ENCODE measurements at regions of chr22 and their contacts with region 1.

Region 1: DNA sequence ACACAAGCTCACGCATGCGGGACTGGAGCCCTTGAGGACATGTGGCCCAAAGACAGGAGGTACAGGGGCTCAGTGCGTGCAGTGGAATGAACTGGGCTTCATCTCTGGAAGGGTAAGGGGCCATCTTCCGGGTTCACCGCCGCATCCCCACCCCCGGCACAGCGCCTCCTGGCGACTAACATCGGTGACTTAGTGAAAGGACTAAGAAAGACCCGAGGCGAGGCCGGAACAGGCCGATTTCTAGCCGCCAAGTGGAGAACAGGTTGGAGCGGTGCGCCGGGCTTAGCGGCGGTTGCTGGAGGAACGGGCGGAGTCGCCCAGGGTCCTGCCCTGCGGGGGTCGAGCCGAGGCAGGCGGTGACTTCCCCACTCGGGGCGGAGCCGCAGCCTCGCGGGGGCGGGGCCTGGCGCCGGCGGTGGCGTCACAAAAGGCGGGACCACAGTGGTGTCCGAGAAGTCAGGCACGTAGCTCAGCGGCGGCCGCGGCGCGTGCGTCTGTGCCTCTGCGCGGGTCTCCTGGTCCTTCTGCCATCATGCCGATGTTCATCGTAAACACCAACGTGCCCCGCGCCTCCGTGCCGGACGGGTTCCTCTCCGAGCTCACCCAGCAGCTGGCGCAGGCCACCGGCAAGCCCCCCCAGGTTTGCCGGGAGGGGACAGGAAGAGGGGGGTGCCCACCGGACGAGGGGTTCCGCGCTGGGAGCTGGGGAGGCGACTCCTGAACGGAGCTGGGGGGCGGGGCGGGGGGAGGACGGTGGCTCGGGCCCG is at the start of gene MIF:
- DNase-seq: peak; percentile 99

Region 2: DNA sequence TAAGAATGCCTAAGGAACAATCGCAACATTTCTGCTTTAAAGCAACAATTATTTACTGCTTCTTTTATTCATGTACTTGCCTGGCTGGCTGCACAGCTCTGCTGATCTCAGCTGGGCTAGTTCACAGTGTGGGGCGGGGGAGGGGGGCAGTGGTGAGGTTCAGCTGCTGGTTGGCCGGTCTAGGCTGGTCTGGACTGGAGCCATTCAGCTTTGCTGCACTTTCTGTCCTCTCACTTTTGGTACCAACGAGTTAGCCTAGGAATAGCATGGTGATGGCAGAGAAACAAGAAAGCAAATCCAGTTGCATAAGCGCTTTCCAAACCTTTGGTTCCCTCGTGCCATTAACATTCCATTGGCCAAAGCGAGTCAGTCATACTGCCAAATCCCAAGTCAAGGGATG is 15.9 kb before region 1 on chr22:
- CTCF ChIA-PET with region 1: interaction called, 3 read pairs
- POLR2A ChIA-PET with region 1: interaction called, 16 read pairs
- DNase-seq: no peak

Region 3: DNA sequence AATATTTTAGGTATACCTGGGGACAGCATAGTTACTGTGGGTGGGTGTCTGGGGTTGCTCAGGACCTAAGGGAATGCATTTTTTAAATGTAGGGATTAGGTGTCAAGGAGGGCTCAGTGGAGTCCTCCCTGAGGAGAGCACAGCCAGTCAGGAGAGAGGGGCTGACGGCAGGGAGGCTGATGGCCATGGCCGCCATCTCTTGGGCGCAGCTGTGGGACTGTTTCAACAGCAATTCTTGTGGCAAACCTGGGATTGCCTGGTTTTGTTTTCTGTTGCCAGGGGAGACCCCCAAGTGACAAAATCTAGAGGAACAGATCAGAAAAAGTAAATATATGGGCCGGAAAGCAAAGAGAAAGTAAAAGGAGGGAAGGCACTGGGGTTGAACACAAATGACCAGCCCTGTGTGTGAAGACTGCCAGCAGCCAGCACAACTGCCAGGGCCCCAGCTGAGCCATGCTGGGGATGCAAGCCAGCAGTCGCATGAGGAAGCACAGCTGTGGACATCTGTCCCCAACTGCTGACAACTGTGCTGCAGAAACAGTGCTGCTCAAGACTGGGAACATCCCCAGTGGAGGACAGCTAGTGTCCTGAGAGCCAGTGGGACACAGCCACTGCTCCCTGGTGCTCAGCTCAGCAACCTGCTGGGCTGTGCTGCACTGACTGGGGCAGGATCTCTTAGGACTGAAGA is 10.6 kb after region 1 on chr22:
- CTCF ChIA-PET with region 1: interaction called, 7 read pairs
- POLR2A ChIA-PET with region 1: interaction called, 124 read pairs
- DNase-seq: no peak

Region 4: DNA sequence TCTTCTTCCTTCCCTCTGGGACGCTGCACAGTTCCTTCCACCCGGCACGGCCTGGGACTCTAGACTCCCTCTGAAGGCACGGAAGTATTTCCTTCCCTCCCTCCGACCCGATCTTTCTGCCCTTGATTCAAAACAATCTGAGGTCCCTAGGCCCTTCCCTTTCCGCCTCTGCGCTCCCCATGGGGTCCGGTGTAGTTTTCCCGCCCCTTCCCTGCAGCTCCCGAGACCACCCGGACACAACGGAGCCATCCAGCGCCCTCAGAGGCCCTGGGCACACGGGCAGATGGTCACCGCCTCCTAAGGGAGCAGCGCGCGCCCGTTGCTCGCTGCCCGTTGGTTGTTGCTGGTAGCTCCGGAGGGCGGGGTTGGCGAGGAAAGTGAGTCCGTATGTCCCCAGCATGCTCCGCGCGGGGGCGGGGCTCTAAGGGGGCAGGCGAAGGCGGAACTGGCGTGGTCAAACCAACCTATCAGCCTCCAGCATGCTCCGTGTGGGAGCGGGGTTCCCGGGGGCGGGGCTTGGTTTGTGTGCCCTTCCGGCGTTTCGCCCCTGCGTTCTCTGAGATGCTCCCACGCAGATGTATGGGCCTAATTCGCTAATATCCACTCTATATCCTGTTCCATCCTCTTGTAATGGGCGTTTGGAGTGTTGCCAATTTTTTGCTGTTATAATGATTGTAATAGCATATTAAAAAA is 19.7 kb after region 1 on chr22:
- CTCF ChIA-PET with region 1: interaction called, 6 read pairs
- POLR2A ChIA-PET with region 1: interaction called, 124 read pairs
- DNase-seq: peak; percentile 100

Measured in HEK293T (cell line).